ENCODE measurements at regions of chr9 and their contacts with region 1.

Region 1: DNA sequence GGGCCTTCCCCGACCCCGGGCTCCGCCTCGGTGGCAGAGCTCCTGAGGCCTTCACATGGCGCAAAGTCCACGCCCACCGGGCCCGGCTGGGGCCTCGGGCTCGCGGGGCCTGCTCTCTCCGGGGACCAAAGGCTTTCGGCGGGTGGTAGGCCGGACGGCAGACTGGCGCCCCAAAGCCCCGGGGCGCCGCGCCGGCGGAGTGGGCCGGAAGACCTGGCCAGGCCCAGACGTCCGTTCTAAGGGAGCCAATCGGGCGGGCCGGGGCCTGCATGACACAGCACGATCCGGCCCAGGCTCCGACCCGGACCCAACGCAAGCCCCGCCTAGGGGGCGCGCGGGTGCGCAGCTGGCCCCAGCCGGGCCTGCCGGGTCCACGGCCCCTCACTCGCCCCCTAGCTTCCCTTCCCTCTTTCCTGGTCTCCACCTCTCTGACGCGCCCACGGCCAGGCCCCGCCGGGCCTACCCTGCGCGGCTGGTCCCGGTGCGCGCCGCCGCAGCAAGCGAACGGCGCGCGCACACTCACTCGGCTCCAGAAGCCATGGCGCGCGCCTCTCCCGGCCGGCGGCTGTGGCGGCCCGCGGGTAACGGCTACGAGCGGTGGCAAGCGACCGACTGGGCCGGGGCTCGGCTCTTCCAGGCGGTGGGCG is 488 bp downstream of the VCP start:
- DNase-seq: peak; percentile 83
- ATAC-seq: peak; percentile 47
- H3K4me3 Mint-ChIP-seq: peak overlapping the region; percentile 91
- H3K27ac Mint-ChIP-seq: peak overlapping the region; percentile 95
- H3K4me1 Mint-ChIP-seq: peaks cover 56% of the 10 kb centered on the region
- H3K27me3 Mint-ChIP-seq: no peaks in the 10 kb centered on the region

Region 2: GRCh38 chr9:35051069-35051967 is 20.6 kb before region 1 on chr9:
- CTCF ChIA-PET with region 1: interaction called, 15 read pairs
- POLR2A ChIA-PET with region 1: interaction called, 11 read pairs
- intact Hi-C with region 1: no loop called
- DNase-seq: peak; percentile 76
- ATAC-seq: peak; percentile 87
- H3K4me3 Mint-ChIP-seq: no peak overlapping the region
- H3K27ac Mint-ChIP-seq: peak overlapping the region; percentile 15
- H3K4me1 Mint-ChIP-seq: no peaks in the 10 kb centered on the region
- H3K27me3 Mint-ChIP-seq: no peaks in the 10 kb centered on the region

Region 3: DNA sequence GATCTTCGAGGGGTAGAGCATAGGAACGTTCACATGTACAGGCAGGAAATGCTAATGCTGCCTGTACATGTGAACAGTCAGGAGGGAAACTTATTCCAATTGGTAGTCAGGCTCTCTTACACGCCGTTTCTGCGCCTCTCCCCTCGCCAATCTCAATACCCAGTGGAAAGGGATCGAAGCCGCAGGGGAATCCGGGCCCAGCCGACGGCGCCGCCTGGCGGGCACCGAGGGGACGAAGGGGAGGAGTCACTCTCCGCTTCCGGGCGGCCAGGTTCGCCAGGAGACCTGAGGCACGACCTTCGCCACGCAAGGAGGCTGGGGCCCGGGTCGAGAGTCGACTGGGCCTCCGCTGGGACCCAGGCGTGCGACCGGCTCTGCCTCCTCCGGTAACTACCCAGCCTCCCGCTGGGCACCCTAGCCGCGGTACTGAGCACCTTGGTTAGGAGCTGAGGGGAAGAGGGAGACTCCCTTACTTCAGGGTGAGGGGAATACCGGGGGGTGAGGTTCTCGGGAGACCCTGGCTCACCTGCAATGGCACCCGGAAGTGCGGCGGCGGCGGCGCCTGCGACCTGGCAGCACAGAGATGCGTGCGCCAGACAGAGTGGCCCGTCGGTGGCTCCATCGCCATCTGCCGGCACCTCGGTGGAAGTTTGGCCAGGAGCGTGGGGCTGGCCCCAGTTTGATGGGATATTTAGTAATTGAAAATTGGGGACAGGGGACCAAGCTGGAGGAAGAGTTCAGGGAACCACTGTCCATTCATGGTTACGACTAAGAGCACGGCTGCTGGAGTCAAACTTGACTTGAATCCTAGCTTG is 24.3 kb after region 1 on chr9 and contains the start of gene PIGO:
- CTCF ChIA-PET with region 1: interaction called, 54 read pairs
- POLR2A ChIA-PET with region 1: interaction called, 5 read pairs
- intact Hi-C with region 1: loop called (anchors 1 kb)
- DNase-seq: peak; percentile 95
- ATAC-seq: peak; percentile 91
- H3K4me3 Mint-ChIP-seq: peak within 1 kb of the TSS; percentile 85
- H3K27ac Mint-ChIP-seq: peak within 1 kb of the TSS; percentile 92
- H3K4me1 Mint-ChIP-seq: peaks cover 25% of the 10 kb centered on the region
- H3K27me3 Mint-ChIP-seq: no peaks in the 10 kb centered on the region
- total RNA-seq, gene PIGO: 21.0 to 27.2 TPM

Region 4: GRCh38 chr9:35111001-35111933 is 39.3 kb after region 1 on chr9:
- CTCF ChIA-PET with region 1: no interaction called
- POLR2A ChIA-PET with region 1: interaction called, 4 read pairs
- intact Hi-C with region 1: loop called (anchors 1 kb)
- DNase-seq: peak; percentile 98
- ATAC-seq: peak; percentile 82
- H3K4me3 Mint-ChIP-seq: peak overlapping the region; percentile 63
- H3K27ac Mint-ChIP-seq: peak overlapping the region; percentile 90
- H3K4me1 Mint-ChIP-seq: peaks cover 48% of the 10 kb centered on the region
- H3K27me3 Mint-ChIP-seq: no peaks in the 10 kb centered on the region

Region 5: GRCh38 chr9:35161713-35162604 is 90.0 kb after region 1 on chr9 and contains the start of gene UNC13B:
- CTCF ChIA-PET with region 1: no interaction called
- POLR2A ChIA-PET with region 1: no interaction called
- intact Hi-C with region 1: no loop called
- DNase-seq: peak; percentile 85
- ATAC-seq: peak; percentile 93
- H3K4me3 Mint-ChIP-seq: peak within 1 kb of the TSS; percentile 84
- H3K27ac Mint-ChIP-seq: peak within 1 kb of the TSS; percentile 4
- H3K4me1 Mint-ChIP-seq: peaks cover 22% of the 10 kb centered on the region
- H3K27me3 Mint-ChIP-seq: no peaks in the 10 kb centered on the region
- total RNA-seq, gene UNC13B: 2.7 to 4.0 TPM

Region 6: DNA sequence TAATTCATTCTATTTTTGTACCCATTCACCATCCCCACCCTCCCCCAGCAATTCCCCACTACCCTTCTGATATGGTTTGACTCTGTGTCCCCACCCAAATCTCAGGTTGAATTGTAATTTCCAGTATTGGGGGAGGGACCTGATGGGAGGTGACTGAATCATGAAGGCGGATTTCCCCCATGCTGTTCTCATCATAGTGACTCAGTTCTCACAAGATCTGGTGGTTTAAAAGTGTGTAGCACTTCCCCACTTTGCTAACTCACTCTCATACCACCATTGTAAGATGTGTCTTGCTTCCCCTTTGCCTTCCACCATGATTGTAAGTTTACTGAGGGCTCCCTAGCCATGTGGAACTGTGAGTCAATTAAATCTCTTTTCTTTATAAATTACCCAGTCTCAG is 507.2 kb after region 1 on chr9:
- CTCF ChIA-PET with region 1: no interaction called
- POLR2A ChIA-PET with region 1: no interaction called
- intact Hi-C with region 1: loop called in 1 of 2 experiments (anchors 2 kb)
- DNase-seq: peak; percentile 69
- ATAC-seq: peak; percentile 96
- H3K4me3 Mint-ChIP-seq: peak overlapping the region; percentile 28
- H3K27ac Mint-ChIP-seq: peak overlapping the region; percentile 89
- H3K4me1 Mint-ChIP-seq: peaks cover 23% of the 10 kb centered on the region
- H3K27me3 Mint-ChIP-seq: no peaks in the 10 kb centered on the region